Activated CD4-positive, alpha-beta T cell treated with anti-CD3 and anti-CD28 coated beads for 36 hours (primary cell): ENCODE measurements at regions of chr1 and their contacts with region 1.

Region 1: DNA sequence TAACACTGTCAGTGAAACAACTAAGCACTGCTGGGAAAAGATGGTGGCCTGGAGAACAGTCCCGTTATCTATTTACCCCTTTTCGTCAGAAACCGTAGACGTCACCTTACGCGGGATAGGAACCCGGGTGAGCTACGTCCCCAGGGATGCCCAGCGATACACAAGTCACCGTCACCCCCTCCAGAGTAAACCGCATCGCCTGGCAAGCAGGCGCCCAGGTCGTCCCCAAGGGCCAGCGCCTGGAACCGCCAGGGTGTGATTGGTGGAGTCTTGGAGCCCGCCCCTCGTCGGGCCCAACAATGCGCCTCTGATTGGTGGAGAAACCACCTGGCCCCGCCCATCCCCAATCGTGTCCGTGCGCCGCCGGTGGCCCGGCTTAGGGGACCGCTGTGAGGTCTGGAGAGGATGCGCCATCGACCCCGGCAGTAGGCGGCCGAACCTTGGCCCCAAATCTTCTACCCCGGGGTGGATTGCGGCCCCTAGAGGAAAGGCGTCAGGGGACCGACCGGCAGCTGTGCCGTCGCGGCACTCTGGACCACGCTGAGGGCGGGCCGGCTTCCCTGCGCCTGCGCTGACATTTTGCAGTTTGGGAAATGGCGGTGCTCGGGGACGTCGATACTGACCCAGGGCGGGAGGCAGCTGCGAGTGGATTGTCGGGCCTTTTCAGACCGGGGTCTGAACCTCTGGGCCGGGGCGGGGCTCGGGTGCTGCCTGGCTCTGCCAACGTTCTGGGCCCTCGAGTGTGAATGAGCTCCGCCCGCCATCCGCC is 34.4 kb downstream of the SLC2A1 start:
- DNase-seq: peak; percentile 95
- ATAC-seq: peak; percentile 87
- H3K4me3 Mint-ChIP-seq: peak overlapping the region; percentile 87
- H3K27ac Mint-ChIP-seq: peak overlapping the region; percentile 95
- H3K4me1 Mint-ChIP-seq: peaks cover 32% of the 10 kb centered on the region
- H3K27me3 Mint-ChIP-seq: no peaks in the 10 kb centered on the region

Region 2: DNA sequence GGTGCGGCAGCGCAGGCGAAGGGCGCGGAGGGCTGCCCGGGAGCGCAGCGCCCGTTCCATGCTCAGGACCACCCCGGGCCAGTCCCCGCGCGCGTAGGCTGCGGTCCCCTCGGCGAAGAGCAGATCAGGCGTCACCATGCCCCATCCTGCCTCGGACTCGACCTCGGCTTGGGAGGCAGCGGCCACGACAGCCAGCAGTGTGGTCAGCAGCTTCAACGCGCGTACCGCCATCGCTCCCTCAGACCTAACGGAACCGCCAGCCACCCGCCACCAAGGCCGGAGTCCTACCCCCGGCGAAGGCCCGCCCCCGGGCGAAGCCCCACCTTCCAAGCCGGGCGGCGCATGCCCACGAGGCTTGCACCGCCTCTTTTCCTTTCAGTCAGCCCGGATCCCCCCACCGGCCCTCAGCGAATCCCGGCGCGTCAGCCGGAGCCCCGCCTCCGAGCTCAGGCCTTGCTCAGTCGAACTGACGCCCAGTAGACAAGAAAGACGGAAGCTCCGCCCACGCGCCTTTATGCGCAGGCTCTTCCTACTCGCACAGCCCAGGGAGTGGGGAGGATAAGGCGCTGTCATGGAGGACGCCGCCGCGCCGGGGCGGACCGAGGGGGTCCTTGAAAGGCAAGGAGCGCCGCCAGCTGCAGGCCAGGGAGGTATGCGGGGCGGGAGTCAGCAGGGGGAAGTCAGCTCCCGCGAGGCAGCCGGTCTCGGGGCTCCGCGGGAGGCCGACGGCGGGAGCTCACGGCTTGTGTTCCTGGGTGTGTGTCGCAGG is 157.3 kb before region 1 on chr1 and contains the starts of genes C1orf50 and P3H1:
- CTCF ChIA-PET with region 1: no interaction called
- POLR2A ChIA-PET with region 1: interaction called, 3 read pairs
- intact Hi-C with region 1: loop called (anchors 1 to 2 kb)
- DNase-seq: peak; percentile 100
- ATAC-seq: peak; percentile 96
- H3K4me3 Mint-ChIP-seq: no peak within 1 kb of the TSS
- H3K27ac Mint-ChIP-seq: peak within 1 kb of the TSS; percentile 85
- H3K4me1 Mint-ChIP-seq: peaks cover 36% of the 10 kb centered on the region
- H3K27me3 Mint-ChIP-seq: no peaks in the 10 kb centered on the region
- total RNA-seq, gene C1orf50: 4.0 to 8.0 TPM
- total RNA-seq, gene P3H1: 24.3 to 28.8 TPM

Region 3: DNA sequence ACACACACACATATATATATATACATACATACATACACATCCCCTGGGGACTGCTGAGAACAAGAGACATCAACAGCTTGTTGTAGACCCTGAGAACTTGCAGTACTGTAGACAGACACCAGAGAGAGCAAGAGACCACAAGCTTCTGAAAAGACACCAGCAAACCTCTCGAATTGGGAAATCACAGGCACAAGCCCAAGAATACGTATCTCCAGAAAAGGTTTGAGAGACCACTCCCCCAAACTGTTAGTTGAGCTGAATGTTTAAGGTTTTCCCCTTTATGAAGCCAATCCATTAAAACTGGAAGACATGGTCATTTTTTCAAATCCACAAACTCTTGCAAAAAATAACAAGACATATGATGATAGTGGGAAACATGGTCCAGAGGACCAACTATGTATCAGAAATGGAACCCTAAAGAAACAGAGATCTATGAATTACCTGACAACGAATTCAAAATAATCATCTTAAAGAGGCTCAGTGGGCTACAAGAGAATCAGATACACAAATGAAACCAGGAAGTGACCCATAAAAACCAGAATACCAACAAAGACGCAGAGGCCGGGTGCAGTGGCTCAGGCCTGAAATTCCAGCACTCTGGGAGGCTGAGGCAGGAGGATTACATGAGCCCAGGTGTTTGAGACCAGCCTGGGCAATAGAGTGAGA is 10.7 kb before region 1 on chr1:
- CTCF ChIA-PET with region 1: interaction called, 59 read pairs
- POLR2A ChIA-PET with region 1: interaction called, 3 read pairs
- intact Hi-C with region 1: no loop called
- DNase-seq: peak; percentile 82
- ATAC-seq: peak; percentile 90
- H3K4me3 Mint-ChIP-seq: no peak overlapping the region
- H3K27ac Mint-ChIP-seq: no peak overlapping the region
- H3K4me1 Mint-ChIP-seq: peaks cover 5% of the 10 kb centered on the region
- H3K27me3 Mint-ChIP-seq: peaks cover 9% of the 10 kb centered on the region

Region 4: GRCh38 chr1:42952303-42953001 is 28.2 kb after region 1 on chr1:
- CTCF ChIA-PET with region 1: interaction called, 12 read pairs
- POLR2A ChIA-PET with region 1: interaction called, 10 read pairs
- intact Hi-C with region 1: no loop called
- DNase-seq: no peak
- ATAC-seq: no peak
- H3K4me3 Mint-ChIP-seq: no peak overlapping the region
- H3K27ac Mint-ChIP-seq: no peak overlapping the region
- H3K4me1 Mint-ChIP-seq: peaks cover 88% of the 10 kb centered on the region
- H3K27me3 Mint-ChIP-seq: no peaks in the 10 kb centered on the region

Region 5: GRCh38 chr1:43058545-43059355 is 134.5 kb after region 1 on chr1:
- CTCF ChIA-PET with region 1: interaction called, 10 read pairs
- POLR2A ChIA-PET with region 1: no interaction called
- intact Hi-C with region 1: no loop called
- DNase-seq: peak; percentile 70
- ATAC-seq: peak; percentile 79
- H3K4me3 Mint-ChIP-seq: peak overlapping the region; percentile 23
- H3K27ac Mint-ChIP-seq: peak overlapping the region; percentile 56
- H3K4me1 Mint-ChIP-seq: peaks cover 17% of the 10 kb centered on the region
- H3K27me3 Mint-ChIP-seq: peaks cover 9% of the 10 kb centered on the region

Region 6: GRCh38 chr1:43367904-43368645 is 443.8 kb after region 1 on chr1 and contains the start of gene ELOVL1:
- CTCF ChIA-PET with region 1: no interaction called
- POLR2A ChIA-PET with region 1: no interaction called
- intact Hi-C with region 1: loop called in 1 of 2 experiments (anchors 2 kb)
- DNase-seq: peak; percentile 94
- ATAC-seq: peak; percentile 83
- H3K4me3 Mint-ChIP-seq: peak within 1 kb of the TSS; percentile 90
- H3K27ac Mint-ChIP-seq: peak within 1 kb of the TSS; percentile 93
- H3K4me1 Mint-ChIP-seq: peaks cover 30% of the 10 kb centered on the region
- H3K27me3 Mint-ChIP-seq: no peaks in the 10 kb centered on the region
- total RNA-seq, gene ELOVL1: 56.0 to 72.1 TPM